ENCODE measurements at regions of chr4 and their contacts with region 1.

Region 1: DNA sequence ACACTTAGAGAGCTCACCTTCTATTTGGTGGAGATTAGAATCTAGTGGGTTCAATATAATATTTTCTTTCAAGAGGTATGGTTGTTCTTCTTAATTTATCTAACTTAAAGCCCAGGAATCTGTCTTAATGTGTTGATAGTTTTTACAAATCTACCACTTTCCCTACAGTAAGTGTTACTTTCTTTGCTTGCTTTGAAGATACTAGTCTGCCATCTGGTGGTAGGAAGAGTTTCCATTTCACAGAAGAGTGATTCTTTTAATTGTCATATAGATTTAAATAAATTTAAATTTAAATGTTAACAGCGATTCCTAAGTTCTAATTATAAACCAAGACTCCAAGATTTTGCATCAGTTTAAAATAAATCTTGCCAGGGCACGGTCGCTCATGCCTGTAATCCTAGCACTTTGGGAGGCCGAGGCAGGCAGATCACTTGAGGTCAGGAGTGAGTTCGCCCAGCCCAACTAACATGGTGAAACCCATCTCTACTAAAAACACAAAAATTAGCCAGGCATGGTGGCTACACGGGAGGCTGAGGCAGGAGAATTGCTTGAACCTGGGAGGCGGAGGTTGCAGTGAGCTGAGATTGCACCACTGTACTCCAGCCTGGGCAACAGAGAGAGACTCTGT is 43.5 kb downstream of the NUDT9 start:
- DNase-seq: no peak
- ATAC-seq: peak; percentile 36

Region 2: GRCh38 chr4:87304671-87305432 is 161.0 kb before region 1 on chr4:
- intact Hi-C with region 1: no loop called
- DNase-seq: no peak
- ATAC-seq: no peak

Region 3: DNA sequence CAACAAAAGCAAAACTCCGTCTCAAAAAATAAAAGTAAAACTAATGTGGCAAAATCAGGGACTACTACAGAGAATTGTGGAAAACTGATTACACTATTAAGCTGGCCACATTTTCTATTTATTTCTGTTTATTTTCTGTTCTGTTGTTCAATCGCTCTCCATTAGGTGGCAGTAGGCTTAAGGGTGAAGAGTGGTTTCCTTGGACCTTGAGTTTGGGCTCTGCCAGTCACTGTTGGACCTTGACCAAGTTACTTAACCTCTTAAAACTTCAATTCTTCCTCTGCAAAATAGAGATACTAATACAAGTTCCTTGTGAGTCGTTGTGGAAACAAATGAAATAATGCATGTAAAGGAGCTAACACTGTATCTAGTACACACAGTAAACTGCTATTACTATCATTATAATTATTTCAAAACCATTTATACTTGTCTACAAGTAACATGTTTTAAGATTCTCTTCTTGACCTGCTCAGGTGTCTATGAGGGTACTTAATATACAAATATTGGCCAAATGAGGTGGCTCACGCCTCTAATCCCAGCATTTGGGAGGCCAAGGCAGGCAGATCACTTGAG is 90.0 kb before region 1 on chr4:
- intact Hi-C with region 1: loop called (anchors 5 kb)
- DNase-seq: no peak
- ATAC-seq: peak; percentile 79

Region 4: DNA sequence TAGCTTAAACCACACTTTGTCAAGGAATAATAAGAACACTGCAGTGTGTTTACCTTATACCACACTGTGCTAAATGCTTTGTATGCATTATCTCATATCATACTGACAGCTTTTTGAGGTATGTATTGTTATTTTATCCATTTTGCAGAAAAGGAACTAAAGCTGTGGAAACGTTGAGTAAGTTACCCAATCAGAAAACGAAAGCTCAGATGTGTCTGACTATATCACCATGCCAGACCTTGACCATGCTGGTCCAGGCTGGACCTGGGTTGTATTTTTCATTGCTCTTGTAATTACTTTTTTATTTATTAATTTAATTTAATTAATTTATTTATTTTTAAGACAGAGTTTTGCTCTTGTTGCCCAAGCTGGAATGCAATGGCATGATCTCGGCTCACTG is 77.0 kb before region 1 on chr4:
- intact Hi-C with region 1: loop called (anchors 2 kb)
- DNase-seq: no peak
- ATAC-seq: no peak

Measured in left ventricle myocardium superior (tissue), 1 donor.